ENCODE measurements at regions of chr5 and their contacts with region 1.

Region 1: GRCh38 chr5:77775790-77776553 is at the start of gene TBCA:
- DNase-seq: peak; percentile 91
- H3K4me3 Mint-ChIP-seq: peak within 1 kb of the TSS; percentile 90
- H3K27ac Mint-ChIP-seq: peak within 1 kb of the TSS; percentile 96
- H3K4me1 Mint-ChIP-seq: peaks cover 54% of the 10 kb centered on the region
- H3K27me3 Mint-ChIP-seq: no peaks in the 10 kb centered on the region
- total RNA-seq, gene TBCA: 260 and 267 TPM in 2 replicates

Region 2: GRCh38 chr5:77697692-77698091 is 78.3 kb before region 1 on chr5:
- intact Hi-C with region 1: loop called (anchors 5 kb)
- DNase-seq: no peak
- H3K4me3 Mint-ChIP-seq: no peak overlapping the region
- H3K27ac Mint-ChIP-seq: no peak overlapping the region
- H3K4me1 Mint-ChIP-seq: peaks cover 31% of the 10 kb centered on the region
- H3K27me3 Mint-ChIP-seq: no peaks in the 10 kb centered on the region

Region 3: GRCh38 chr5:77751668-77752023 is 24.3 kb before region 1 on chr5:
- intact Hi-C with region 1: loop called (anchors 1 kb)
- DNase-seq: no peak
- H3K4me3 Mint-ChIP-seq: no peak overlapping the region
- H3K27ac Mint-ChIP-seq: peak overlapping the region; percentile 30
- H3K4me1 Mint-ChIP-seq: peaks cover 37% of the 10 kb centered on the region
- H3K27me3 Mint-ChIP-seq: no peaks in the 10 kb centered on the region

Region 4: GRCh38 chr5:77852514-77853352 is 76.8 kb after region 1 on chr5:
- intact Hi-C with region 1: loop called (anchors 1 kb)
- DNase-seq: peak; percentile 35
- H3K4me3 Mint-ChIP-seq: peak overlapping the region; percentile 72
- H3K27ac Mint-ChIP-seq: peak overlapping the region; percentile 77
- H3K4me1 Mint-ChIP-seq: peaks cover 14% of the 10 kb centered on the region
- H3K27me3 Mint-ChIP-seq: peaks cover 23% of the 10 kb centered on the region

Region 5: DNA sequence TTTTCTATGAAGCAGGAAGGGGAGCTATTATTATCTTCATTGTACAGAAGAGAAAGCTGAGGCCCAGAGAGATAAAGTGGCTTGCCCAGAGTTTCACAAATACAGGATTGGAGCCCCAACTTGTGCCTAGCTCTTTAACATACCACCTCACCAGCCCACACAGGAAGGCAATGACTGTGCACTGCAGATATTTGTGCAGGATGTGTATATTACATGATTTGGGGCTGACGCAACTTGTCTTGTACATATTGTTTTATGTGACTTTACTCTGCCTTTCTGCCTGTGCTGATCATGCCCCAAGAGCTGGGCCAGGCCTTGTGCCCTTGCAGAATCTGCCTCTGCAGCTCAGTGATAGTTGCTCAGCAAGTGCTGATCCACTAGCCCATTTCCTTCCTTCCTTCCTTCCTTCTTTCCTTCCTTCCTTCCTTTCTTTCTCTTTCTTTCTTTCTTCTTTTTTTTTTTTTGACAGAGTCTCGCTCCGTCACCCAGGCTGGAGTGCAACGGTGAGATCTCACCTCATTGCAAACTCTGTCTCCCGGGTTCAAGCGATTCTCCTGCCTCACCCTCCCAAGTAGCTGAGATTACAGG is 106.8 kb after region 1 on chr5:
- intact Hi-C with region 1: loop called (anchors 2 kb)
- DNase-seq: no peak
- H3K4me3 Mint-ChIP-seq: no peak overlapping the region
- H3K27ac Mint-ChIP-seq: peak overlapping the region; percentile 50
- H3K4me1 Mint-ChIP-seq: peaks cover 30% of the 10 kb centered on the region
- H3K27me3 Mint-ChIP-seq: peaks cover 16% of the 10 kb centered on the region